ENCODE measurements at regions of chr7 and their contacts with region 1.

Region 1: GRCh38 chr7:102018876-102019275 is 201.4 kb downstream of the CUX1 start:
- DNase-seq: no peak
- H3K4me3 ChIP-seq: no peak overlapping the region
- H3K27ac ChIP-seq: no peak overlapping the region
- H3K4me1 ChIP-seq: no peaks in the 10 kb centered on the region
- H3K27me3 ChIP-seq: no peaks in the 10 kb centered on the region
- CTCF ChIP-seq: no peak
- POLR2A ChIP-seq: no peak

Region 2: DNA sequence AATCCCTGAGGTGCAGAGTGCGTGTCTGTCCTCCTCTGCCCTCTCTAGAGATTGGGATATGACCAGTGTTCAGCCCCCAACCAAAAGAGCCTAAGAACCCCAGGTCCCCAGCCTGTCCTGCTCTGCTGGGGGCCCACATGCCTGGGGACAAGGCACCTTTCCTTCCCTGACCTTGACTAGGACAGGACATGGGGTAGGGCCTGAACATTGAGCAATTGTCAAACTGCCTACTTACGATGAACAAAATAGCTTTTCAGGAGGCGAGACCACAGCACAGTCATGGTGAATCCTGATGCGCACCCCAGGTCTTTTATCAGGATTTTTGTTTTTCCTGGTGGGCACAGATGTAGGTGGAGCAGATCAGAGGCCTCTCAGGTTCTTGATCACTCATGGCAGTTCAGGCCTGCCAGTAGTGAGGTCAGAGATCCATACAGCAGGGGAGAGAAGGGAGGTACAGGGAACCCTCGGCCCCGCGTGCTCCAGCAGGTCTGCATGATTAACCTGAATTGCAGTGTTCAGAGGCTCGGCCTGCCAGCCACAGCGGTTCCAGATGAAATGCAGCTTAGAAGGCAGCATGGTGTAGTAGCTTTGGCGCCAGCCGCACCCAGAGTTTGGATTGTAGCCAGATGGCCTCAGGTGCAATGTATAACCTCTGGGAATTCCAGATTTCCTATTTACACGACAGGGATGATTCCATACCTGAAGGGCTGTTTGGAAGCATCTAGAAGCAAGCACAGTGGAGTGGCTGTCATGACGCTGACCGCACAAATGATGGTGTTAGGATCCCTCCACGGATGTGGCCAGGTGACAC is 10.1 kb before region 1 on chr7:
- intact Hi-C with region 1: loop called (anchors 1 kb)
- DNase-seq: no peak
- H3K4me3 ChIP-seq: no peak overlapping the region
- H3K27ac ChIP-seq: no peak overlapping the region
- H3K4me1 ChIP-seq: no peaks in the 10 kb centered on the region
- H3K27me3 ChIP-seq: no peaks in the 10 kb centered on the region
- CTCF ChIP-seq: no peak
- POLR2A ChIP-seq: no peak

Measured in breast epithelium (tissue), 4 donors.